ENCODE measurements at regions of chr2 and their contacts with region 1.

Region 1: GRCh38 chr2:233251306-233252116 is at the start of gene ATG16L1:
- DNase-seq: peak; percentile 96
- ATAC-seq: peak; percentile 97
- H3K4me3 ChIP-seq: peak within 1 kb of the TSS; percentile 88 to 98 (median 90)
- H3K27ac ChIP-seq: peak within 1 kb of the TSS; percentile 82
- H3K4me1 ChIP-seq: peaks cover 50% of the 10 kb centered on the region
- H3K27me3 ChIP-seq: no peaks in the 10 kb centered on the region; a peak in 1 of 5 replicates
- CTCF ChIP-seq: peak; percentile 99
- EP300 ChIP-seq: peak in 1 of 2 experiments; percentile 51; a peak in 1 of 4 replicates
- POLR2A ChIP-seq: peak; percentile 93 to 97
- RAD21 ChIP-seq: peak; percentile 100
- total RNA-seq, gene ATG16L1: 51.7 and 61.2 TPM in 2 replicates

Region 2: GRCh38 chr2:232854082-232854481 is 397.4 kb before region 1 on chr2:
- CTCF ChIA-PET with region 1: interaction called, 3 read pairs
- POLR2A ChIA-PET with region 1: interaction called, 9 read pairs
- in situ Hi-C with region 1: loop called (anchors 5 kb)
- intact Hi-C with region 1: loop called (anchors 2 kb)
- DNase-seq: no peak
- ATAC-seq: no peak
- H3K4me3 ChIP-seq: no peak overlapping the region
- H3K27ac ChIP-seq: no peak overlapping the region
- H3K4me1 ChIP-seq: peaks cover 58% of the 10 kb centered on the region
- H3K27me3 ChIP-seq: no peaks in the 10 kb centered on the region
- CTCF ChIP-seq: no peak
- EP300 ChIP-seq: no peak
- POLR2A ChIP-seq: no peak
- RAD21 ChIP-seq: no peak

Region 3: GRCh38 chr2:232927793-232928550 is 323.5 kb before region 1 on chr2:
- CTCF ChIA-PET with region 1: no interaction called
- POLR2A ChIA-PET with region 1: no interaction called
- in situ Hi-C with region 1: no loop called
- intact Hi-C with region 1: no loop called
- DNase-seq: no peak
- ATAC-seq: no peak
- H3K4me3 ChIP-seq: no peak overlapping the region
- H3K27ac ChIP-seq: no peak overlapping the region
- H3K4me1 ChIP-seq: no peaks in the 10 kb centered on the region
- H3K27me3 ChIP-seq: no peaks in the 10 kb centered on the region
- CTCF ChIP-seq: no peak
- EP300 ChIP-seq: no peak
- POLR2A ChIP-seq: no peak
- RAD21 ChIP-seq: no peak

Region 4: DNA sequence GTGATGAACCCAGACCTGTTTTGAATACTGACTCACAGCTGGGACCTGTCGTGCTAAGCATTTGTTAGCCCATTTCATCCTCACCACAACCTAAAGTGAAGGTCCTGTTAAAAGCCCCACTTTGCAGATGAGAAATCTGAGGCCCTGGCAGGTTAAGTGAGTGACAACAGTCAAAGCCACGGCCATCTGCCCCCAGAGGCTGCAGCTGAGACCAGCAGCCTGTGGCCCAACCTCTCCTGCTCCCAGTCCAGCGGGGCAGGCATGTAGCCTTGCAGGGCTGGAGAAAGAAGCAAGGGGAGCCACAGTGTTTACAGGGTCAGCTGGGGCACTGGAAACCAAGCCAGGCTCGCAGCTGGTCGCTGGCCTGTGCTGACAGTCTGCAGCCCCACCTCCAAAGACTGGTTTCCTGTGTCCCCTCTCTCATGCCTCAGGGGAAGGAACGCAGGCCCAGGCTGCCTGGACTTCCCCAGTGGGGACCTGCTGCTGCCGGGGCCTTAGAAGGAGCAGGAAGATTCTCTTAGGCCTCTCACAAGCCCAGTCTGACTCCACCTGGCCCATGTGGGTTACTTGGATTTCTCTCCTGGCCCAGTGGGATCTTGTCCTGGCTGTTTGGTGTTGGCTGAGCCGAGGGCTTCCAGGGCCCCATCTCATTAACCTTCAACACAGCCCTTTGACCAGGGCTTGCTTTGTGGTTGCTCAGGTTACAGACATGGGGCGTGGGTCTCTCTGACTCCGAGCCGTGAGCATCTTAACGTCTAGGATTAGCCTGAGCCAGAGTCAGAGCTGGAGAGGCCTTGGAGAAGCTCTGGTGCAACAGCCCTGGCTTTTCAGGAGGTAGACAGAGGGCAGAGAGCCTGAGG is 189.7 kb before region 1 on chr2:
- CTCF ChIA-PET with region 1: no interaction called
- POLR2A ChIA-PET with region 1: interaction called, 7 read pairs
- in situ Hi-C with region 1: no loop called
- intact Hi-C with region 1: loop called (anchors 1 kb)
- DNase-seq: peak; percentile 88
- ATAC-seq: peak; percentile 76
- H3K4me3 ChIP-seq: peak overlapping the region; percentile 66 to 87 (median 80)
- H3K27ac ChIP-seq: peak overlapping the region; percentile 82
- H3K4me1 ChIP-seq: peaks cover 78% of the 10 kb centered on the region
- H3K27me3 ChIP-seq: no peaks in the 10 kb centered on the region; a peak in 1 of 5 replicates
- CTCF ChIP-seq: peak; percentile 76
- EP300 ChIP-seq: peak; percentile 19 to 30; a peak in 1 of 4 replicates
- POLR2A ChIP-seq: peak in 1 of 2 experiments; percentile 66; a peak in 2 of 4 replicates
- RAD21 ChIP-seq: peak; percentile 69

Region 5: GRCh38 chr2:233353769-233354499 is 102.4 kb after region 1 on chr2 and contains the start of gene DGKD:
- CTCF ChIA-PET with region 1: no interaction called
- POLR2A ChIA-PET with region 1: interaction called, 3 read pairs
- in situ Hi-C with region 1: no loop called
- intact Hi-C with region 1: loop called (anchors 10 kb)
- DNase-seq: peak; percentile 79
- ATAC-seq: peak; percentile 69
- H3K4me3 ChIP-seq: peak within 1 kb of the TSS; percentile 91 to 94 (median 93)
- H3K27ac ChIP-seq: peak within 1 kb of the TSS; percentile 68
- H3K4me1 ChIP-seq: peaks cover 76% of the 10 kb centered on the region
- H3K27me3 ChIP-seq: no peaks in the 10 kb centered on the region; a peak in 1 of 5 replicates
- CTCF ChIP-seq: peak; percentile 22
- EP300 ChIP-seq: no peak; a peak in 1 of 4 replicates
- POLR2A ChIP-seq: peak; percentile 27 to 43; a peak in 2 of 4 replicates
- RAD21 ChIP-seq: peak; percentile 39; the same call in 1 of the 2 replicates
- total RNA-seq, gene DGKD: 20.6 and 24.5 TPM in 2 replicates

Measured in HepG2 (cell line).